GM10248 (cell line): ENCODE measurements at regions of chr1 and their contacts with region 1.

Region 1: GRCh38 chr1:167270349-167271092 is 49.8 kb downstream of the POU2F1 start:
- DNase-seq: no peak
- CTCF ChIP-seq: no peak

Region 2: DNA sequence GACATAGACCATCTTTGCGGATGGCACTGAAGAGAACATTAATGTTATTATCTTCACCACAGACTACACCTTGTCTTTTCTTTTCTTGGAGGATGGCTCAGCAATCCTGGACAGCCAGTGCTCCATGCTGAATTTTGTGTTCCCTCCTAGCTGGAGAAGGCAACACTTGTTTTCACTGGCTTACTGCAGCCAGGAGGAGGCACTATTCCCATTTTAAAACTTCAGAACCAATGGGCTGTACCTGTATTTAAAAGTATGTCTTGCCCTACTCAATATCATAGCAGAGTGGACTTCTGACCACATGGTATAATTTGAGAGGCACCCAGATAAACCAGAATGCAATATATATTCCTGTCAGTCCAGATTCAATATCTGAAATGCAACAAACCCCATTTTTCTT is 484.5 kb before region 1 on chr1:
- CTCF ChIA-PET with region 1: no interaction called
- POLR2A ChIA-PET with region 1: no interaction called
- DNase-seq: no peak
- CTCF ChIP-seq: no peak

Region 3: DNA sequence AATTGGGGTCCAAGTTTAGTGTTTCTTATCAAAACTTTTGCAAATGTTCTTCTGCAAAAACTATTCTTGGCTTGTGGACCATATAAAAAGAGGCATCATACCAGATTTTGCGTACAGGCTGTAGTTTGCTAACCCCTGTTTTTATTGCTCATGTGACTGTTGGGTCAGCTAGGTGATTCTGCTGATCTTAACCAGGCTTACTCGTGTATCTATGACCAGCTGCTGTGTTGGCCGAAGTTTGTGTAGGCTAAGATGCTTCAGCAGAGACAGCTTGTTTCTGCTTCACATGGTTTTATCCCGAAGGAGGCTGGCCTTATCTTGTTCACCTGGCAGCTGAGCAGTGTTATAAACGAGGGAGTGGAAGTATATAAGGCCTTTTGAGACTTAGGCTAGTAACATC is 11.7 kb before region 1 on chr1:
- CTCF ChIA-PET with region 1: interaction called, 33 read pairs
- POLR2A ChIA-PET with region 1: no interaction called
- DNase-seq: no peak
- CTCF ChIP-seq: no peak

Region 4: GRCh38 chr1:167342846-167343245 is 72.3 kb after region 1 on chr1:
- CTCF ChIA-PET with region 1: interaction called, 23 read pairs
- POLR2A ChIA-PET with region 1: no interaction called
- DNase-seq: peak; percentile 33
- CTCF ChIP-seq: no peak

Region 5: DNA sequence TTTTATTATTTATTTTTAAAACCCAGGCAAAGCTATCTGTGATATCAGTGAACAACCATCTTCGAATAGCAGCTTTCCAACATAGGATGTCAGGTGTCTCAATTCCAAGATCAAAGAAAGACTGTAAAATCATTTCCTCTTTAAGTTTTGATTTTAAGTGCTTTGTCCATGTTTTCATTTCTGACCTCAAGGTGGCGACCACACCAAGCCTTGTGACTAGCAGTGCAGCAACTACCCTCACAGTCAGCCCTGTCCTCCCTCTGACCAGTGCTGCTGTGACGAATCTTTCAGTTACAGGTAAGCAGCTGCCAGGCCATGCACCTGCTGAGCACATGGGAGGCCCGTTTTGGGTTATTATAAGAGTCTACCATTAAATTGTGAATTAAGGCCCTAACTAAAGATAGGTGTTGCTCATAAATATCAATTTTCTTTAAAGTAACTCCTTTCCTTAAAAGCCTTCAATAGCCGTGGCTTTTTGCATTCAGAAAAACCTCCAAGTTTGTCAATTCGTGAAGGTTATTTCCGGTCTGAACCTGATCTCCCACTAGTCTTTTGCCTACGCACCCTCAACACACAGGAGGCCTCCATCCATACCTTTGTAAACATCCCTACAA is 130.8 kb after region 1 on chr1:
- CTCF ChIA-PET with region 1: interaction called, 11 read pairs
- POLR2A ChIA-PET with region 1: no interaction called
- DNase-seq: peak; percentile 46
- CTCF ChIP-seq: peak; percentile 53

Region 6: GRCh38 chr1:167533851-167534300 is 263.4 kb after region 1 on chr1:
- CTCF ChIA-PET with region 1: interaction called, 33 read pairs
- POLR2A ChIA-PET with region 1: no interaction called
- DNase-seq: peak; percentile 81
- CTCF ChIP-seq: peak; percentile 89